ENCODE measurements at regions of chr5 and their contacts with region 1.

Region 1: DNA sequence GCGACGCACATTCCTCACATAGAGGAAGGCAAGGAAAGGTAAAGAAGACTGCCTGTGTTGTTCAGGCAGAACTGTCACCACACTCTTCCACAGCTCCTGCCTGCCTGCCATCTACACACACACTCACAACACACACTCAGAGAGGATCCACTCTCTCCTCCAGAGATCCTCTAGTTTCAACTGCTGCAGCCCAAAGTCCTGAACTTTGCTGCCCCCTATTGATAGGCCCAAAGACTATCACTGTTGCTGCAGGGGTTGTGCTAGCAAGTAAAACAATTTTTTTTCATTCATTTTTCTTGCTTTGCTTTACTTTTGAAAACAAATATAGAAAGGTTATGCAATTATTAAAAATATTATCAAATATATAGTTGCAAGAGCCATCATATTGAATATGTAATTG is 5.9 kb upstream of the CFAP90 start:
- DNase-seq: peak in 4 of 5 donors; percentile 36 to 46 (median 42)
- H3K4me3 ChIP-seq: no peak overlapping the region
- H3K4me3 Mint-ChIP-seq: no peak overlapping the region
- H3K27ac ChIP-seq: no peak overlapping the region
- H3K27ac Mint-ChIP-seq: no peak overlapping the region
- H3K4me1 ChIP-seq: peaks cover 24% of the 10 kb centered on the region
- H3K4me1 Mint-ChIP-seq: peaks cover 21 to 33% (median 27%) of the 10 kb centered on the region in 4 donors
- H3K27me3 ChIP-seq: no peaks in the 10 kb centered on the region
- H3K27me3 Mint-ChIP-seq: no peaks in the 10 kb centered on the region

Region 2: GRCh38 chr5:6780802-6781391 is 1076.0 kb before region 1 on chr5:
- CTCF ChIA-PET with region 1: no interaction called
- POLR2A ChIA-PET with region 1: no interaction called
- intact Hi-C with region 1: loop called (anchors 5 kb)
- DNase-seq: peak in 2 of 5 donors; percentile 13 to 15
- H3K4me3 ChIP-seq: no peak overlapping the region
- H3K4me3 Mint-ChIP-seq: no peak overlapping the region
- H3K27ac ChIP-seq: no peak overlapping the region
- H3K27ac Mint-ChIP-seq: no peak overlapping the region
- H3K4me1 ChIP-seq: no peaks in the 10 kb centered on the region
- H3K4me1 Mint-ChIP-seq: peaks cover 0 to 3% (median 1%) of the 10 kb centered on the region in 4 donors
- H3K27me3 ChIP-seq: no peaks in the 10 kb centered on the region
- H3K27me3 Mint-ChIP-seq: peaks cover 7 to 24% of the 10 kb centered on the region in 2 donors

Region 3: DNA sequence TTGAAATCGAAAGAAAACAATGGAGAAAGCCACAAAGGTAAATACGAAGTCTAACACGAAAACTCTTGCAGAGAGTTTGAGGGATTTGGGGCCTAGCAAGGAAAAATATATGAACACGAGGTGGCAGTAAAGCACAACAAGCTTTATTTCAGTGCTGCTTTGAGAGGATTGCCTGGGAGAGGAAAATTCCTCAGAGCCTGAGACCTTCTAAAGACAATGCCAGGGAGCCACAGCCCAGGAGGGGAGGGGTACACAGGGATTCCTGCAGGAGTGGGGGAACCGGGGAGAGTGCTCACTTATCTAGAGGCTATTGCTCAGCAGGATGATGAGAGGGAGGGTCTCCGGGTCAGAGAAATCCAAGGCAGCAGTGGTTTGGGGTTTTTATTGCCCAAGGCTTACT is 595.8 kb before region 1 on chr5:
- CTCF ChIA-PET with region 1: interaction called, 11 read pairs
- POLR2A ChIA-PET with region 1: no interaction called
- intact Hi-C with region 1: no loop called
- DNase-seq: peak in 3 of 5 donors; percentile 1 to 9 (median 8)
- H3K4me3 ChIP-seq: no peak overlapping the region
- H3K4me3 Mint-ChIP-seq: no peak overlapping the region
- H3K27ac ChIP-seq: no peak overlapping the region
- H3K27ac Mint-ChIP-seq: no peak overlapping the region
- H3K4me1 ChIP-seq: no peaks in the 10 kb centered on the region
- H3K4me1 Mint-ChIP-seq: no peaks in the 10 kb centered on the region
- H3K27me3 ChIP-seq: no peaks in the 10 kb centered on the region
- H3K27me3 Mint-ChIP-seq: peaks cover 0 to 2% of the 10 kb centered on the region in 2 donors

Region 4: GRCh38 chr5:7845557-7845956 is 11.3 kb before region 1 on chr5:
- CTCF ChIA-PET with region 1: interaction called, 15 read pairs
- POLR2A ChIA-PET with region 1: no interaction called
- intact Hi-C with region 1: no loop called
- DNase-seq: no peak
- H3K4me3 ChIP-seq: no peak overlapping the region
- H3K4me3 Mint-ChIP-seq: no peak overlapping the region
- H3K27ac ChIP-seq: no peak overlapping the region
- H3K27ac Mint-ChIP-seq: no peak overlapping the region
- H3K4me1 ChIP-seq: peaks cover 11% of the 10 kb centered on the region
- H3K4me1 Mint-ChIP-seq: peaks cover 0 to 8% (median 4%) of the 10 kb centered on the region in 4 donors
- H3K27me3 ChIP-seq: peaks cover 15% of the 10 kb centered on the region
- H3K27me3 Mint-ChIP-seq: peaks cover 27 to 28% of the 10 kb centered on the region in 2 donors

Measured in CD4-positive, alpha-beta memory T cell (primary cell).